Prostate gland (tissue), 2 donors: ENCODE measurements at regions of chr17 and their contacts with region 1.

Region 1: GRCh38 chr17:64281962-64282727 is 19.1 kb upstream of the TEX2 start:
- DNase-seq: peak; percentile 46
- H3K4me3 ChIP-seq: no peak overlapping the region
- H3K27ac ChIP-seq: no peak overlapping the region
- H3K4me1 ChIP-seq: no peaks in the 10 kb centered on the region
- H3K27me3 ChIP-seq: no peaks in the 10 kb centered on the region
- CTCF ChIP-seq: peak; percentile 46 to 82 (median 73)
- POLR2A ChIP-seq: no peak

Region 2: GRCh38 chr17:63919311-63919723 is 362.8 kb before region 1 on chr17:
- intact Hi-C with region 1: loop called (anchors 10 kb)
- DNase-seq: peak; percentile 16
- H3K4me3 ChIP-seq: no peak overlapping the region
- H3K27ac ChIP-seq: no peak overlapping the region
- H3K4me1 ChIP-seq: no peaks in the 10 kb centered on the region
- H3K27me3 ChIP-seq: no peaks in the 10 kb centered on the region
- CTCF ChIP-seq: peak; percentile 76 to 90 (median 87)
- POLR2A ChIP-seq: no peak

Region 3: DNA sequence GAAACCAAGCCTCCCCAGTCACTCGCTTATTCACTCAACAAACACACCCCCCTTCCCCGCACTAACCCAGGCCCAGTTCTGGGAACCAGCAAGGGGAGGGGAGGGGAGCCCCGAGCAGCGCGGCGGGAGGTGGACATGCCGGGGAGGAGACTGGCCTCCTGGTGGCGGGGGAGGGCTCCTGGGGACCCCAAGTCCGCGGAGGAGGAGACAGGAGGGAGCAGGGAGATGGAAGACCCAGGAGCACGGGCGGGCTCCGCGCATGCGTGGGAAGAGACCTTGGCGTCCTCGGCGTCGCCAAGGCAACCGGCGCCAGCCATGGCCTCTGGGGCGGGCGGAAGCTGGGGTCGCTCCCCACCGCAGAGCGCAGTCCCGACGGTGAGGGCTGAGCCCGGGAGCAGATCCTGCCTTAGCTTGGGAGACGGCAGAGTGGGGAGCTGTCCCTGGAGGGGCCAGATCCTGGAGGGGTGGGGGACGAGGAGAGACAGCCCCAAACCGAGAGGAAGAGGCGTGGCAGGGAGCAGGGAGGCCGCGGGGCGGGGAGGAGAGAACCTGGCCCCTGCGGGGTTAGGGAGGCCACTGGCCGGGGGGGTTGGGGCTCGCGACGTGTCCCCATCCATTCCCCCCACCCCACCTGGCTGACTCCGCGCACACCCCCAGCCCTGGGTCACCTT is 284.0 kb before region 1 on chr17 and contains the start of gene PRR29:
- intact Hi-C with region 1: no loop called
- DNase-seq: peak; percentile 33
- H3K4me3 ChIP-seq: peak within 1 kb of the TSS; percentile 41 to 44
- H3K27ac ChIP-seq: no peak within 1 kb of the TSS
- H3K4me1 ChIP-seq: no peaks in the 10 kb centered on the region
- H3K27me3 ChIP-seq: no peaks in the 10 kb centered on the region
- CTCF ChIP-seq: no peak
- POLR2A ChIP-seq: no peak
- total RNA-seq, gene PRR29: 0.09 to 0.74 TPM

Region 4: GRCh38 chr17:64063766-64064224 is 218.3 kb before region 1 on chr17:
- intact Hi-C with region 1: loop called (anchors 5 kb)
- DNase-seq: peak; percentile 78
- H3K4me3 ChIP-seq: no peak overlapping the region
- H3K27ac ChIP-seq: peak overlapping the region; percentile 63 to 71
- H3K4me1 ChIP-seq: peaks cover 7% of the 10 kb centered on the region
- H3K27me3 ChIP-seq: no peaks in the 10 kb centered on the region
- CTCF ChIP-seq: peak; percentile 53 to 89 (median 84)
- POLR2A ChIP-seq: no peak

Region 5: GRCh38 chr17:64129764-64130558 is 152.2 kb before region 1 on chr17 and contains the start of gene ERN1:
- intact Hi-C with region 1: loop called (anchors 5 kb)
- DNase-seq: peak; percentile 95
- H3K4me3 ChIP-seq: peak within 1 kb of the TSS; percentile 78 to 90
- H3K27ac ChIP-seq: peak within 1 kb of the TSS; percentile 93 to 94
- H3K4me1 ChIP-seq: peaks cover 4% of the 10 kb centered on the region
- H3K27me3 ChIP-seq: no peaks in the 10 kb centered on the region
- CTCF ChIP-seq: peak in 2 of 4 experiments; percentile 8 to 11
- POLR2A ChIP-seq: peak; percentile 94
- total RNA-seq, gene ERN1: 14.4 to 21.4 TPM

Region 6: DNA sequence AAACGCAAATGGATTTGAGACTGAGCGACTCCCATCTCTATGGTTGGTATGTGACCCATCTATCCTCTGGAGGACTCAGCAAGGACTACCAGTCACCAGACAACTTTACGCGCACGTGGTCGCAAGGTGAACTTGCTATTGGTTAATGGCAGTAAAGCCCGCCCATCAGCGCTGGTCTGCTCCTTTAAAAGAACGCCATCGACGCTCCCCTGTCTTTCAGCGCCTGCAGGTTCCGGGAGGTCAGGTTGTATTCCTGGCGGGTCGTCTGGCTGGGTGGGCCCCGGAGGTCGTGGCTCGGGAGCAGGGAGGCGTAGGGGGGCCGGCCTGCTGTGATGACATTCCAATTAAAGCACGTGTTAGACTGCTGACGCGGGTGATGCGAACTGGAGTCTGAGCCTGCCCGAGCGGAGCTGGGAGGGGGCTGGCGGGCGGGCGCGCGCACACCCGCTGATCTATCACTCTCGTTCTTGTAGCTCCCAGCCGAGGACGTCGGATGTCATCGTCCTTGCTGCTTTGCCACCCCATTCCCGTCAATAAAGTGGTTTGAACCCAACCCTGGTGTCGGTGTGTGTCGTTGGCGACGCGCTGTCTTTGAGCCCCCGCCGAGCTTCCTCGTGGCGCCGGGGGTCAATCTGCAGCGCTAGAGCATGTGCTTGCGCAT is 136.3 kb before region 1 on chr17:
- intact Hi-C with region 1: loop called (anchors 5 kb)
- DNase-seq: peak; percentile 99
- H3K4me3 ChIP-seq: peak overlapping the region; percentile 68 to 83
- H3K27ac ChIP-seq: peak overlapping the region; percentile 92 to 99
- H3K4me1 ChIP-seq: no peaks in the 10 kb centered on the region
- H3K27me3 ChIP-seq: no peaks in the 10 kb centered on the region
- CTCF ChIP-seq: peak in 1 of 4 experiments; percentile 48
- POLR2A ChIP-seq: no peak